ENCODE measurements at regions of chrX and their contacts with region 1.

Region 1: GRCh38 chrX:109475174-109475891 is 6.6 kb downstream of the GUCY2F start:
- DNase-seq: peak; percentile 27
- H3K4me3 ChIP-seq: no peak overlapping the region
- H3K27ac ChIP-seq: no peak overlapping the region
- H3K4me1 ChIP-seq: no peaks in the 10 kb centered on the region
- H3K27me3 ChIP-seq: no peaks in the 10 kb centered on the region
- CTCF ChIP-seq: peak; percentile 38 to 51

Region 2: DNA sequence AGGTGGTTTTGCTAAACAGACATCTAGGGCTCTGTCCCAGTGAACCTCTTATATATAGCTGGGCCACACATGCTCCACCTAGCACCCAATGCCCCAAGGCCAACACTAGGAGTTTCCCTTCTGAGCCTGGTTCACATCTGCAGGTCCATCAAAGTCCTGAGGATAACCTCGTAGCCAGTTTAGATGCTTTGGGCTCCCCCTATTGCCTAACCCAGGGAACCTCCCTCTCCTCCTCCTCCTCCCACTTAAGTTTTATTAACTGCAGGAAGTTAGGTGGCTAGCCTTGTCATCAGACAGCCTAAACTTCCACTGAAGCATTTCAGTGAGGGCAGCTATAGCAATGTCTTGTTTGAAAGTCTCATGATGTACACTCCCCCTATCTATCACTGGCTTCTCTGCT is 81.5 kb before region 1 on chrX:
- CTCF ChIA-PET with region 1: no interaction called
- dilution Hi-C with region 1: no loop called
- in situ Hi-C with region 1: no loop called
- intact Hi-C with region 1: loop called (anchors 5 kb)
- DNase-seq: peak; percentile 12
- H3K4me3 ChIP-seq: no peak overlapping the region
- H3K27ac ChIP-seq: no peak overlapping the region
- H3K4me1 ChIP-seq: peaks cover 5% of the 10 kb centered on the region
- H3K27me3 ChIP-seq: no peaks in the 10 kb centered on the region
- CTCF ChIP-seq: peak; percentile 21 to 23

Region 3: GRCh38 chrX:109498434-109498833 is 23.1 kb after region 1 on chrX:
- CTCF ChIA-PET with region 1: no interaction called
- dilution Hi-C with region 1: no loop called
- in situ Hi-C with region 1: no loop called
- intact Hi-C with region 1: no loop called
- DNase-seq: no peak
- H3K4me3 ChIP-seq: no peak overlapping the region
- H3K27ac ChIP-seq: no peak overlapping the region
- H3K4me1 ChIP-seq: no peaks in the 10 kb centered on the region
- H3K27me3 ChIP-seq: peaks cover 9% of the 10 kb centered on the region
- CTCF ChIP-seq: no peak

Measured in mammary epithelial cell (primary cell).